Transverse colon (tissue), 4 donors: ENCODE measurements at regions of chr13 and their contacts with region 1.

Region 1: DNA sequence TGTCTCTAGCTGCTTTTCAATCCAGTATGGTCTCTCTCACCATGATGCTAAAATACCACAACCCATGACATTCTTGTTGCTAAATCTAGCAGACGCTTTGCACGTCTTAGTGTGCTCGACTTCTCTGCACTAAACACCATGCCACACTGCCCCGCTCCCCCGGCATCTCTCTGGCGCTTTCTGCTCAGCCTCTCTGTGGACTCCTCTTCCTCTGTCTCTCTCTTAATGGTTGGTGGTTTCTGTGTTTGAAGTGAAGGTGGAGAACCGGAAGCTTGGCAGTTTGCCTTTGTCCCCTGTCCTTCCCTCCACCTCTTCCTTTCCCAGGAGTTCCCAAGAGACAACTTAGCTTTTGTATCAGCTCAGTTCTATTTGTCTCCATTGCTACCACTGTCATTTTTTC is 8.8 kb downstream of the ERCC5 start:
- DNase-seq: no peak
- H3K4me3 ChIP-seq: no peak overlapping the region
- H3K27ac ChIP-seq: no peak overlapping the region
- H3K4me1 ChIP-seq: peaks cover 0 to 12% (median 0%) of the 10 kb centered on the region in 4 donors
- H3K27me3 ChIP-seq: no peaks in the 10 kb centered on the region
- CTCF ChIP-seq: no peak
- EP300 ChIP-seq: no peak
- POLR2A ChIP-seq: no peak

Region 2: DNA sequence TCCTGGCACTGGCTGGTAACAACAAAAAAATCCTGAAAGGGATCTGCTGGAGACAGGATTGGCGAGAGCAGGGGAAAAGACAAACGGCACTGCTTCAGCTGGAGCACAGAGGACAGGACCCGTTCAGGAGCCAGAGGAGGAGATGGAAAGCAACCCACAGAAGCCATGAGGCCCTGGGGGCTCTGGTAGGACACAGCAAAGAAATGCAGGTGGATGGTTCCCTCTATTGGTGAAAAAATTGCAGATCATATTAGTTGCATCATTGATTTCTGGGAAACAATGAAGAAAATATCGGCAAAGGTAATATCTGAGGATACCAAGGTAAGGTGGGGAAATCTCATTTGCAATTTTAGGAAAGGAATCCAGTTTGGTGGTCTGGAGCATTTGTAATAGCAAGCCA is 283.6 kb before region 1 on chr13:
- in situ Hi-C with region 1: loop called in 1 of 4 experiments (anchors 10 kb)
- intact Hi-C with region 1: no loop called
- DNase-seq: no peak
- H3K4me3 ChIP-seq: no peak overlapping the region
- H3K27ac ChIP-seq: no peak overlapping the region
- H3K4me1 ChIP-seq: no peaks in the 10 kb centered on the region
- H3K27me3 ChIP-seq: peaks cover 7% of the 10 kb centered on the region
- CTCF ChIP-seq: no peak
- EP300 ChIP-seq: no peak
- POLR2A ChIP-seq: no peak

Region 3: GRCh38 chr13:103178986-103179943 is 324.6 kb after region 1 on chr13:
- in situ Hi-C with region 1: no loop called
- intact Hi-C with region 1: no loop called
- DNase-seq: no peak
- H3K4me3 ChIP-seq: no peak overlapping the region
- H3K27ac ChIP-seq: no peak overlapping the region
- H3K4me1 ChIP-seq: no peaks in the 10 kb centered on the region
- H3K27me3 ChIP-seq: no peaks in the 10 kb centered on the region
- CTCF ChIP-seq: no peak
- EP300 ChIP-seq: no peak
- POLR2A ChIP-seq: no peak